Gastrocnemius medialis (tissue), 4 donors: ENCODE measurements at regions of chr5 and their contacts with region 1.

Region 1: GRCh38 chr5:10418654-10419345 is 22.9 kb upstream of the ROPN1L start:
- DNase-seq: no peak
- ATAC-seq: no peak
- H3K4me3 ChIP-seq: no peak overlapping the region
- H3K27ac ChIP-seq: no peak overlapping the region
- H3K4me1 ChIP-seq: no peaks in the 10 kb centered on the region
- H3K27me3 ChIP-seq: no peaks in the 10 kb centered on the region
- CTCF ChIP-seq: no peak
- POLR2A ChIP-seq: no peak

Region 2: DNA sequence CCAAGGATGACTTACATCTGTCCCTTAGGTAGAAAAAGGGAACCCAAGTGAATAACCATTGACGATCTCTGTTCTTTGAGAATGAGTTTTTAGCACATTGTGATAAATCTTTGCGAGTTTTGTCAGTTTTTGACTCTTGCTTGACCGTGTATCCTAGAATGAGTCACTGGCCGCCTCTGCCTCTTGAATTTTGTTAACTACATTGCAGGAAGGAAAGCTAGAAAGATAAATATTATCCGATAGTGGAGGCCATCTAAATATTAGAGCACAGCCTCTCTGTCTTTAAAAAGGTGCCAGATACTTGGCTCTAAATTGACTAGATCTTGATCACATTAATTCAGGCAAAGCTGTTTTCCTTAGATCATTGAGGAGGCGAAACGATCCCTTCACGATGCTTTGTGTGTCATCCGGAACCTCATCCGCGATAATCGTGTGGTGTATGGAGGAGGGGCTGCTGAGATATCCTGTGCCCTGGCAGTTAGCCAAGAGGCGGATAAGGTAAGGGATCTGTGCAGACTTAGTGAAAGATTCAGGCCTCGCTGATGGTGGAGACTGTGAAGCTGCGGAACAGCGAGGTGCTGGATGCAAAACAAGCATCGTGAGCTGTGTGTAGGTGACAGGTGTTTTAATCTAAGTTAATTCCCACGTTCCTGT is 156.6 kb before region 1 on chr5:
- in situ Hi-C with region 1: loop called in 1 of 4 experiments (anchors 10 kb)
- intact Hi-C with region 1: no loop called
- DNase-seq: no peak
- ATAC-seq: no peak
- H3K4me3 ChIP-seq: no peak overlapping the region
- H3K27ac ChIP-seq: peak overlapping the region in 1 of 4 donors; percentile 67
- H3K4me1 ChIP-seq: peaks cover 2 to 4% of the 10 kb centered on the region in 2 donors
- H3K27me3 ChIP-seq: no peaks in the 10 kb centered on the region
- CTCF ChIP-seq: no peak
- POLR2A ChIP-seq: no peak